Left colon (tissue), 2 donors: ENCODE measurements at regions of chr12 and their contacts with region 1.

Region 1: DNA sequence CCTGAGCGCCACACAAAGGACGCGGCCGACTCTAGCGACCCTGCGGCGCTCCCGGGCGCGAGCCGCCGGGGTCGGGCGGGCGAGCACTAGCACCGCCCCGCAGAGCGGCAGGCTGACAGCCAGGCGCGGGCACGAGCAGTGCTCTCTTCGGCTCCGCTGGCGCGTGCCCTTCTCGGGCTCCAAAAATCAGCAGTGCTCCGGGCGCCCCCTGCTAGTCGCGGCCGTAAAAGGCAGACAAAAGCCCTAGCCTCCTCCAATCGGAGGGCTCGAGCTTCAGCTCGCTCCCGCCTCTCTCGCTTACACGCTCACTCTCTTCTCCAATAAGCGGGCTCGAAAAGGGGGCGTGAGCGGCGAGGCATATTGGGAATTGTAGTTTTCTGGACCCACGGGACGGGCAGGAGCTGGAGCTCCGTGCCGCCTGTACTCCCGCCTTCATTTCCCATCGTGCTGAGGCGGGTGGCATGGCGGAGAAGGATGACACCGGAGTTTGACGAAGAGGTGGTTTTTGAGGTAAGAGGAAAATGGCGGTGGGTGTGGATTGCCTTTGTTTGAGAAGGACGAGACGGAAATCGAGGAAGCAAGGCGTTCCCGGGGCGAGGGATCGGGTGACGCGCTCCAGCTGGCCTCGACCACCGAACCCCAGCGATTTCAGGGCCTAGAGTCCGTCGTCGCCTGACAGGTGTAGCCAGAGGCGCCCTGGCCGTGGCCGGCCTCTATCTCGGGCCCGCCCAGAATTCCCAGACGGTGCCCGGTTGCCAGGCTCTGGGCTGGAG is at the starts of genes FGD6 and VEZT:
- DNase-seq: peak; percentile 98 to 99
- ATAC-seq: peak; percentile 86
- total RNA-seq, gene FGD6: 18.7 to 23.8 TPM
- total RNA-seq, gene VEZT: 50.9 to 54.4 TPM

Region 2: GRCh38 chr12:95473884-95474659 is 256.5 kb after region 1 on chr12 and contains the start of gene METAP2:
- intact Hi-C with region 1: loop called in 1 of 2 experiments (anchors 5 kb)
- DNase-seq: peak; percentile 97
- ATAC-seq: peak; percentile 97
- total RNA-seq, gene METAP2: 36.1 to 45.6 TPM

Region 3: GRCh38 chr12:95532851-95533250 is 315.3 kb after region 1 on chr12:
- intact Hi-C with region 1: loop called in 1 of 2 experiments (anchors 10 kb)
- DNase-seq: no peak
- ATAC-seq: peak; percentile 62